Heart left ventricle (tissue), 16 donors: ENCODE measurements at regions of chr2 and their contacts with region 1.

Region 1: DNA sequence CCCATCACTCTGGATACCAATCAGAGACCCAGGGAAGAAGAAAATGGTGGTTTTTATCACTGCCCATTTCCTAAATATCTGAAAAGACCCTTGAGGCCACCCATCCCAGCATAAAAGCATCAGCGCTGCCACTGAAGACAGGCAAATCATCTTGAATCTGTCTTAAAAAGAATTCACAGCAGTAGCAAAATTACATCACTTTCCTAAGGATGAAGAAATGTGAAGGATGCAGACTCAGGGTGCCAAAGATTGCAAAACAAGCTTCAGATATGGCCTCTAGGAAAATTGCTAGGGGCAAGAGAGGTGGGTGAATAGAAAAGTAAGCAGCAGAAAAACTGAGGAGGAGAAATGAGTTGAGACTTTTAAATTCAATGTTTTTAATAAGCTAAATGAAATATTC is 70.0 kb downstream of the SLC25A12 start:
- DNase-seq: no peak
- ATAC-seq: peak in 1 of 4 donors; percentile 47
- H3K4me3 ChIP-seq: no peak overlapping the region
- H3K27ac ChIP-seq: no peak overlapping the region
- H3K4me1 ChIP-seq: peaks cover 0 to 2% (median 0%) of the 10 kb centered on the region in 12 donors
- H3K27me3 ChIP-seq: no peaks in the 10 kb centered on the region
- CTCF ChIP-seq: no peak
- POLR2A ChIP-seq: no peak

Region 2: GRCh38 chr2:171793691-171794678 is 30.1 kb before region 1 on chr2:
- intact Hi-C with region 1: loop called in 1 of 10 experiments (anchors 5 kb)
- DNase-seq: no peak
- ATAC-seq: no peak
- H3K4me3 ChIP-seq: no peak overlapping the region
- H3K27ac ChIP-seq: no peak overlapping the region
- H3K4me1 ChIP-seq: peaks cover 0 to 12% (median 3%) of the 10 kb centered on the region in 12 donors
- H3K27me3 ChIP-seq: no peaks in the 10 kb centered on the region
- CTCF ChIP-seq: no peak
- POLR2A ChIP-seq: no peak